Kidney (tissue), 22 donors: ENCODE measurements at regions of chr6 and their contacts with region 1.

Region 1: DNA sequence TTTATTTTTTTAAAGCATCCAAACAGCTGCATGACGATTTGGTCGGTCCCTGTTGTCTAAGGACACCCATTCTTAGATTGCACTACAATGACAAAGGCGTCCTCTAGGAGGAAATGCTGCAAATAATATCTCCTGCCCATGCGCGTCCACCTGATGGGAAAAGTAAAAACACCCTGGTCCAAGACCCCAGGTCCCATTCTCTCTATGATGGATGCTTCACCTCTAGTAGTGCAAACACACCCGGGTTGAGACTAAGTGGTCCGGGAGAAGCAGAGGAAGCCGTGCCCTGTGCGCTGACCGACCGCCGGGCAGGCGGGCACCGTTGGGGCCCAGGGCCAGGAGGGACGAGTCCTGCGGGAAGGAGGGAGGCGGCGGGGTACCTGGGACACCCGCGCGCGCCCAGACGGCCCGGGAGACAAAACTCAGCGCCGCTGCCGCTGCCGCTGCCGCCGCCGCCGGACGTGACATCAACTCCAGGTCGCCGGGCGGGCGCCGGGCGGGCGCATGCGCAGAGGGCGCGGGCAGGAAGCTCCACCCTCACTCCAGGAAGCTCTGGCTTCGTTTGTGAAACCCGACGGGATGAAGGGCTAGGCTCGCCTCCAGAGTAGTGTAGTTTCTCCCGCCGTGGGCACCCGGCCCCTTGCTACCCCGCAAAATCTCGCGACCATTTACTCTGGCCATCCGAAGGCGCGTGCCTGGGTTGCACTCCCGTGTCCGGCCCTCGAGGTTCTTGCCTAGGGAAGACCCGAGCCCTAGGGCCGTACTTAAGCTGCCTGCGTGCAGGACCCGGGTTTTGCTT is at the start of gene TBC1D7:
- DNase-seq: peak; percentile 95 to 97 (median 97)
- H3K4me3 ChIP-seq: peak within 1 kb of the TSS; percentile 75 to 98 (median 92)
- H3K27ac ChIP-seq: peak within 1 kb of the TSS; percentile 89 to 92
- H3K4me1 ChIP-seq: peaks cover 0 to 12% (median 0%) of the 10 kb centered on the region in 3 donors
- H3K27me3 ChIP-seq: no peaks in the 10 kb centered on the region
- CTCF ChIP-seq: peak; percentile 11
- total RNA-seq, gene TBC1D7: 12.9 TPM

Region 2: DNA sequence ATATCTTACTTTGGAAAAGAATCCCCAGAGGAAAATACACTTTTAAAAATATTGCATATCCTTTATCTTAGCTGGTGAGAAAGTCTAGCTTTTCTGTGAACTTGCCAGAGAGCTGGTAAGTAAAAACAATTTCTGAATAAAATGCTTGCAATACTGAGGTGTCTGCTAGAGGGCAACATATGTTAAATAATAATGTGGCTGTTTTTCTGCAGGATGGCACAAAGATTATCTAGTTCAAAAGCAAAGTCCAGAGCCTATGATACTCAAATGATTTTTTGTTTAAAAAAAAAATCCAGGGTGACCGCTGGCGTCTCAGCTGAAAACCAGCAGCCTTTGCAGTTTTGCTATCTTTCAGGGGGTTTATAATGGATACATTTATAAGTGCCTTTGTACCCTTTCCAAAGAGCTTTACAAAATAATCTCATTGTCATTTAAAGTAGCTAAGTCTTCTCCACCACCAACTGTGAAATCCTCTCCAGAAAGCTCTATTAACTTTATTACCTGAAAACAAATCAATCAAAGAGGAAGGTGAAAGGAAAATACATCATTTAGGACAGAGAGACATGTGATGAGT is 416.8 kb before region 1 on chr6:
- intact Hi-C with region 1: loop called (anchors 5 kb)
- DNase-seq: peak in 2 of 5 donors; percentile 67 to 74
- H3K4me3 ChIP-seq: no peak overlapping the region
- H3K27ac ChIP-seq: no peak overlapping the region
- H3K4me1 ChIP-seq: no peaks in the 10 kb centered on the region
- H3K27me3 ChIP-seq: no peaks in the 10 kb centered on the region
- CTCF ChIP-seq: peak; percentile 46